ENCODE measurements at regions of chr4 and their contacts with region 1.

Region 1: DNA sequence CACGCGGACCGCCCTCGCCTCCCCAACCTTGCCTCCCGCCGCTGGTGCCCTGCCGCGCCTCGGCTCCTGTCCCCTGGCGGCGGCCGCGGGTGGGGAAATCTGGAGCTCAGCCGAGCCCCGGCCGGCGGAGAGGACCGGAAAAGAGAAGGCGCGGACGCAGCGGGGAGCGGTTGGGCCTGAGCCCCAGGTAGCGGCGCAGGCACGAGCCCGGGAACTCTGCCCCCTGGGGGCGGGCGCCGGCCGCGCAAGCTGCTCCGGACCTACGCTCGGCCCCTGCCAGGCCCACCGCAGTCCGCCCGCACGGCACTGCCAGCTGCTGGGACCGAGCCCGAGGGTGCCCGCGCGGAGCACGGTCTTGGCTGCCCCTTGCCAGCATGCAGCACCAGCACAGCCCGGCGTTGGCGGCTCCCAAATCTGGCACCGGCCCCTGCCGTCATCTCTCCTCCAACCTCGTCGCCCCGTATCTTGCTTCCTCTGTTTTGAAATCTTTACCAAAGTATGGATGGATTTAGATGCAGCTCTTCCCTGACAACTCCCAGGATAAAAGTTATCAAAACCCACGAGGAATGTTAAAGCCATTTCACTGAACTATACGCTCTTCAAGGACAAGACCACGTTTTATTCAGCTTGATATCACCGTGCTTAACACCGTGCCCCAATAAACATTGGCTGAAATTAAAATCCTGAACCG is at the start of gene PRSS12:
- DNase-seq: peak in 1 of 2 experiments; percentile 76
- H3K4me3 ChIP-seq: peak within 1 kb of the TSS; percentile 59; the same call in 1 of the 2 replicates
- H3K27ac ChIP-seq: no peak within 1 kb of the TSS
- H3K4me1 ChIP-seq: peaks cover 5% of the 10 kb centered on the region
- H3K27me3 ChIP-seq: no peaks in the 10 kb centered on the region
- CTCF ChIP-seq: peak; percentile 62
- total RNA-seq, gene PRSS12: 9.6 and 11.3 TPM in 2 replicates

Region 2: GRCh38 chr4:118280501-118281218 is 72.3 kb before region 1 on chr4:
- CTCF ChIA-PET with region 1: no interaction called
- POLR2A ChIA-PET with region 1: no interaction called
- intact Hi-C with region 1: loop called (anchors 1 kb)
- DNase-seq: peak; percentile 35 to 54
- H3K4me3 ChIP-seq: peak overlapping the region; percentile 87
- H3K27ac ChIP-seq: peak overlapping the region; percentile 88
- H3K4me1 ChIP-seq: peaks cover 23% of the 10 kb centered on the region
- H3K27me3 ChIP-seq: no peaks in the 10 kb centered on the region
- CTCF ChIP-seq: peak; percentile 54